ENCODE measurements at regions of chr14 and their contacts with region 1.

Region 1: GRCh38 chr14:32076278-32077080 is 625 bp upstream of the ARHGAP5 start:
- DNase-seq: peak; percentile 97
- ATAC-seq: peak; percentile 93 to 95

Region 2: GRCh38 chr14:31937721-31938346 is 138.6 kb before region 1 on chr14:
- intact Hi-C with region 1: loop called in 1 of 2 experiments (anchors 5 kb)
- DNase-seq: peak; percentile 69
- ATAC-seq: peak in 1 of 2 donors; percentile 94

Region 3: DNA sequence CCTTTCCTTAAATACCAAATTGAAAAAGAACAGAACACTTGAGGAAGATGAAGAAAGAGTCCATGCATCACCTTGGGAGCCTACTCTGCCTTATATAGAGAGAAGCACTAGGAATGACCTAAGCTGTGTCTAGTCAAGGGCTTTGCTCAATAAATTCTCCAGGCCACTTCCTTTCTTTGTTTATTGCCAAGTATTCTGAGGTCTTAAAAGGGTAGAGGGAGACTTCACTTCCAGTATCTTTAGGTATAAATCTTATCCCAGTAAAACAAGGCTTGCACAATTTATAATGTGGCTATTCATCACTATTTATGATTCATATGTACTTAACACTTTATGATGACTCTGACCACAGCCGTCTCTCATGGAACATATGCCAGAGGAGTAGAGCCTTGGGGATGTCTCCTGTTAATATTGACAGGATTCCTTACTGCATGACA is 84.5 kb before region 1 on chr14:
- intact Hi-C with region 1: loop called in 1 of 2 experiments (anchors 2 kb)
- DNase-seq: no peak
- ATAC-seq: peak in 1 of 2 donors; percentile 19

Region 4: DNA sequence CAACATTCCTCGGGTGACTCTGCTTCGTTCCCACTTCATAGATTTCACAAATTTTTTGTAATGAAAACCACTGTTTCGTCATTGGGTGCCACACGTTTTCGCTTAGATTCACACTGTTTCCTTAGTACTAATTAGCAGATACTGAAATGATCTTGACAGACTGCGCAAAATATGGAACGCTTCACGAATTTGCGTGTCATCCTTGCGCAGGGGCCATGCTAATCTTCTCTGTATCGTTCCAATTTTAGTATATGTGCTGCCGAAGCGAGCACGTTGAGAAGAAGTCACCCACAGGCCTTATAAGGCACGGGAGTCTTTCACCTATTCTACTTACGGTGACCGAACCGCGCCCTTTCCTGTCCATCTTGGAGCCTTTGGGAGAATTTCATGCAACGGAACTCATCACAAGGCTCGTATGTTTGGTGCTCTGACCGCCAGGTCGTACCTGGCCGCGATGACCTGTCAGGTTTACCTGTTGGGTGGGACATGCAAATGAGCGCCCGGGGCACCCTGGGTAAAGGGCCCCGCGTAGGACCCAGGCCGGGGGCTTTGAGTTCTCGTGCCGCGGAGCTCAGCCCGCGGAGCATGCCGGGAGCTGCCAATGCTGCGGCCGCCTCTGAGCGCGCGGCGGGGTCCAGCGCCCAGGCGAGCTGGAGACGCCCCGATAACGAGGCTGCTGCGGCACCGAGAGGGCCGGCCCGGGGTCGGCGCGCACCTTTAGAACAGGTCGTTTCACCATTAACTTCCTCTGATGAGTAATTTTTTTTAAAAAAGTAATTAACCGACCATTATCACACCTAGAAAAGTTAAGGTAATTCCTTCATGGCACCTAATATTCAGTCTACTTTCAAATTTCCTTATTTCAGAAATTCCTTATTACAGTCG is 126.8 kb after region 1 on chr14 and contains the start of gene RNU6-8:
- intact Hi-C with region 1: loop called (anchors 2 to 10 kb)
- DNase-seq: peak; percentile 91
- ATAC-seq: peak; percentile 91 to 95
- total RNA-seq, gene RNU6-8: not detected

Region 5: DNA sequence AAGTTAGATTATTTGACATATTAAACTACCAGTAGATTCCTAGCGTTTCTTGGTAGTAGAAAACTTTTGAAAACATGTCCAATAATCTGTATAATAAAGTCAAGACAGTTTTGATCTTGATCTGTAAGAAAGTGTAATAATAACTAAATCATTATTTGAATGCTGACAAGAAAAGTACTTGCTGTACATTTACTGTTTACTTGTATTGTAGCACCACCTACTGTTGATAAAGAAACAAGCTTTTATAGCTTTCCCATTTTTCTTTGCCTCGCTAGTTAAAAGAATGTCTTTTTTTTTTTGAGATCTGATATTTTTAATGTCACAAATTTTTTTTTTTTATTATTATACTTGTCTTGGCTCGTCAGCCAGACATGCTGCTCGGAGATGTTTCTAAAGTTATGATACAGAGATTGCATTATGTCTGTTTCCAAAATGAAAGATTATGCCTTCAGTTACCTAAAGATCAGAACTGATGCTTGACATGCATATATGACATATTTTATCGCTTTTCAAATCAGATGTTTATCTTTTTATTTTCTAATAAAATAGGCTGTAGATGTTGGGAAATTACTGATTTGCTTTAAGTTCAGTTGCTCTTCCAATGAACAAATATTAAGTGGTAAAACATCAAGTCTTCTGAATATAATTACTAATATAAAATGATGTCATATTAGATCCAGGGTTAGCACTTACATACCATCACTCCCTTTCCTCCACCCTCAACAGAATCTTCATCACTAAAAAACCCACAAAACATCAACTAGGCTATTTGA is 393.1 kb after region 1 on chr14:
- intact Hi-C with region 1: loop called (anchors 10 kb)
- DNase-seq: no peak
- ATAC-seq: peak in 1 of 2 donors; percentile 59

Region 6: GRCh38 chr14:32738206-32738871 is 661.9 kb after region 1 on chr14:
- intact Hi-C with region 1: no loop called
- DNase-seq: no peak
- ATAC-seq: no peak

Measured in left cardiac atrium (tissue), 4 donors.